Right lobe of liver (tissue), 6 donors: ENCODE measurements at regions of chr5 and their contacts with region 1.

Region 1: DNA sequence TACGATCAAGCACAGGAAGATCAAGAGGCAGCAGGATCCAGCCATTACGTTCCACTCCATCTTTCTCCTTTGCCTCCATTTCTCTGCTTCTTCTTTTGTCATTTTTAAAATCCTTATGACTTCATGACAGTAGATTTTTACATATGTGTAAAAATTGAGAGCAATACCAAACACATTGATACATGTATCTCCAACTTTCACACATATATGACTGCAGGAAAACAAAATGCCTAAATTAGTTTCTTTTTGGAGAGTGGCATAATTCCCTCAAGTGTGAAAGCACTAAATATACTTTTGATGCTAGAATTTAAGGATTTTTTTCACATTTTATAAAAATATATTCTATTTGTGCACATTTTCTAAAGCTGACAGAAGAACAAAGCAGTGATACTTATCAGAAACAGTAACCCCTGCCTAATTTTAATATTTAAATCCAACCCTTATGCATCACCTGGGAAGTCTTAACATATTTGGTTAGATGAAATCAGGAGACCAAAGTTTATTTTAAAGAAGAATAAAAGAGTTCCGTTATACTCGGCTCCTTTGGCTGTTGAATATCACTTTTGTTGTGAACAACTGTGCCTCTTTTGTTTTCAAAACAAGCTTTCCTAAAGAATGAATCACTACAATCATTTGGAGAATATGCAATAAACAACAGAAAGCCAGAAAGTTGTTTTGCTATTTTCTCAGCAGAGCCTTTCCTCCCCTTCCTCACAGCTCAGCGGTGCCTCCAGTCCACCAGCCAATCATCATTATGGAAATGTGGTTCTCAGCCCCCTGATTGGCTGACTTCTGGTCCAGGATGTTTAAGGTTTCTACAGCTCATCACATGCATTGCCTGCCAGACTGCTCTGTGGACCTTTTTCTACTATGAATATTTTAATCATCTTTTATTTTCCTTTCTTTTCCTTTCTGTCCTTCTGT is 8.9 kb upstream of the ZNF608 start:
- DNase-seq: no peak
- ATAC-seq: no peak
- H3K4me3 ChIP-seq: no peak overlapping the region
- H3K27ac ChIP-seq: no peak overlapping the region
- H3K4me1 ChIP-seq: no peaks in the 10 kb centered on the region
- H3K27me3 ChIP-seq: no peaks in the 10 kb centered on the region
- CTCF ChIP-seq: no peak
- POLR2A ChIP-seq: no peak

Region 2: GRCh38 chr5:124383693-124384092 is 371.6 kb before region 1 on chr5:
- intact Hi-C with region 1: no loop called
- DNase-seq: no peak
- ATAC-seq: no peak
- H3K4me3 ChIP-seq: no peak overlapping the region
- H3K27ac ChIP-seq: no peak overlapping the region
- H3K4me1 ChIP-seq: no peaks in the 10 kb centered on the region
- H3K27me3 ChIP-seq: no peaks in the 10 kb centered on the region
- CTCF ChIP-seq: no peak
- POLR2A ChIP-seq: no peak

Region 3: DNA sequence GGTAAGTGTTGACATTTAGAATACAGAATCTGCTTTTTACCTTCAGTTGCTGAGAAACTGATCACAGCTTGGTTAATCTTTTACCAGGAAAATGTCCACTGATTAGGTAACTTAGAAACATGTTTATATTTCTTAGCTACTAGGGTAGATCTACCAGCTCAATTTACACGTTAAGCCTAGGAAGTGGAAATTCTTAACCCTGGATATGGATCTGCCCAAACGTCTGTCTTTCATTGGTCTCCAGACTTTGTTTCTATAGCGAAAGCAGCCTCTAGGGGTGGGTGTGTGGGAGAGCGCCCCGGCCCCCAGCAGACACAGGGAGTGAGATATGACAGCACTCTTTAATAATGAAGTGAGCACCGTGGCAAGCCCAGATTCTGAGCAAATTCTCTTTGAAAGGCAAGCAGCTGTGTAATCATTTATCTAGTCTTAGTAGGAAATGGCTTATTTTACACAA is 132.8 kb after region 1 on chr5:
- intact Hi-C with region 1: loop called in 1 of 2 experiments (anchors 10 kb)
- DNase-seq: no peak
- ATAC-seq: peak; percentile 80 to 92 (median 83)
- H3K4me3 ChIP-seq: peak overlapping the region in 2 of 3 donors; percentile 29 to 48
- H3K27ac ChIP-seq: peak overlapping the region; percentile 63 to 85 (median 77)
- H3K4me1 ChIP-seq: peaks cover 0 to 20% (median 5%) of the 10 kb centered on the region in 4 donors
- H3K27me3 ChIP-seq: no peaks in the 10 kb centered on the region
- CTCF ChIP-seq: peak in 1 of 4 donors; percentile 15
- POLR2A ChIP-seq: no peak